Heart right ventricle (tissue), 16 donors: ENCODE measurements at regions of chr11 and their contacts with region 1.

Region 1: DNA sequence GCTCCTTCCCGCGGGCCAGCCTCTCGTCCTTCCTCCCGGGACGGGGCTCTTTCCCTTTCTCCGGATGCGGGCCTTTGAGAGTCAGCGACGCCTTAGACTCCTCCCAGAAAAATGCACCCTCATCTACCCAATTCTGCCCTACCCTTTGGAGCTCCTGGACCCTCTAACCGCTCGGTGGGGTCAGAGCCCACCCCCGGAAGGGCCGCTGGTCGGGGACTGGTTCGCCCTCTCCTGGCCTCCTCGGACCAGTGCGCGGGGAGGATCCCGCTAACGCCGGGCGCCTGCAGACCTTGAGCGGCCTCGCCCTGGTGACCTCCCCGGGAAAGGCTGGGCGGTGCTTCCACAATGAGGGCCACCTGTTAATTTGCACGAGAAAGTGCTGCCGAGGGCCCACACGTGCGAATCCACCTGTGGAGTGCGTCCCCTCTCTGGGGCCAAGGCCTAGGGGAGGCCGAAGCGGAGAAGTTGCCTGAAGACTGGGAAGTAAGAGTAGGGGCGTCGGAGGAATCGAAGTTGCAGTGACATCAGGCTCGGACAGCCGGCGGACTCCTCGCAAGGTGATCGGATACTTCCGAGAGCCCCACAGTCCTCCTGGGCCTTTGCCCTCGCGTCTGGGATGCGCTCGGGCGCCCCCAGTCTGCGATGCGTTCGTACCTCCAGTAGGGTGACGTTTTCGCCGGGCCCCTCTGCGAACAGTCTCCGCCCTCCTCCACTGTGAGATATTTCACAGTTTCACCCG is 61.5 kb downstream of the ENDOD1 start:
- DNase-seq: peak; percentile 88 to 93
- ATAC-seq: peak; percentile 90 to 95 (median 93)
- H3K4me3 ChIP-seq: peak overlapping the region; percentile 32 to 77 (median 63)
- H3K27ac ChIP-seq: peak overlapping the region; percentile 80 to 97 (median 94)
- H3K4me1 ChIP-seq: peaks cover 0 to 53% (median 15%) of the 10 kb centered on the region in 9 donors
- H3K27me3 ChIP-seq: no peaks in the 10 kb centered on the region
- CTCF ChIP-seq: peak; percentile 68 to 90 (median 77)

Region 2: DNA sequence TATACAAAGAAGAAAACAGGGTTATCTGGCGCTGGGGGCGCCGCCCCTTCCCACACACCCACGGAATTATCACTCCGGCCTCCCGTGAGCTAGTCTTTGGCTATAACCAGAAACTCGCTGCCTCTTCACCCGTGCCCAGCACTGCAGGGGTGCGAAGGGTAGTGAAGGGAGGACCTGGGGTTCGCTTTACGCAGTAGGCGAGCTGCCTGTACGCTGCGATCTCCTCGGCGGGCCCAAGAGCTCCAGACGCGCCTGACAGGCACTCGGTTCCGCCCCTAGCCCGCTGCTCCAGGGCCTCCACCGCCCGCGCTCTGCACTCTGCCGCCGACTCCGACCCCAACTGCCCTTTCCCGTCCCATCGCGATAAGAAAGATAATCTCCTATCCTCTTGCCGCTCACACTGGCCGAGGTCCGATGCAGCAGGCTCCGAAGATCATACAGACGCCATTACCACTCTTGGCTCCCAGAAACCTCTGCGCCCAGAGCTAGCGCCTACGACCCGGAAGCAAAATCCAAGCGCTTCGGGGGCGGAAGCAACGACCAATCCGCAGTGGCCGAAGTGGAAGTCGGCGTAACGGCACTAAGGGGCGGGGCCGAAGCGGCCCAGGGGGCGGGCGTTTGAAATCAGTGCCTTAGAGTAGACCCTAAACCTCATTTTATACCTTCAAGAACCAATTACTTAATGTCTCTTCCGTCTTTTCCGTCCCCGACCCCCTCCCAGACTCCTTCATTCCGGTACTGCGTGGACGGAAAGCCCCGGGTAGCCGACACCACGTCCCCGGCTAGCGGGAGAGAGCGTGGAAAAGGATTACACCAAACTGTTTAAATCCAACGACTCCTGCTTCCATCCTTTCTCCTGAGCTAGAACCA is 177.8 kb before region 1 on chr11 and contains the starts of genes CWC15 and KDM4D:
- intact Hi-C with region 1: loop called in 4 of 10 experiments (anchors 5 to 10 kb)
- DNase-seq: peak; percentile 94 to 96
- ATAC-seq: peak; percentile 100
- H3K4me3 ChIP-seq: peak within 1 kb of the TSS; percentile 67 to 97 (median 84)
- H3K27ac ChIP-seq: peak within 1 kb of the TSS in 9 of 10 donors; percentile 56 to 88 (median 81)
- H3K4me1 ChIP-seq: peaks cover 2 to 26% (median 15%) of the 10 kb centered on the region in 9 donors
- H3K27me3 ChIP-seq: no peaks in the 10 kb centered on the region
- CTCF ChIP-seq: no peak
- total RNA-seq, gene CWC15: 53.1 to 75.4 (median 67.3) TPM
- total RNA-seq, gene KDM4D: 0.79 to 1.3 (median 1.0) TPM

Region 3: GRCh38 chr11:95089620-95090542 is 61.2 kb before region 1 on chr11 and contains the start of gene ENDOD1:
- intact Hi-C with region 1: loop called in 2 of 10 experiments (anchors 10 kb)
- DNase-seq: peak; percentile 80 to 88
- ATAC-seq: peak; percentile 95 to 99 (median 98)
- H3K4me3 ChIP-seq: peak within 1 kb of the TSS; percentile 81 to 97 (median 95)
- H3K27ac ChIP-seq: peak within 1 kb of the TSS; percentile 74 to 97 (median 94)
- H3K4me1 ChIP-seq: peaks cover 0 to 45% (median 22%) of the 10 kb centered on the region in 9 donors
- H3K27me3 ChIP-seq: peaks cover 0 to 5% (median 0%) of the 10 kb centered on the region in 7 donors
- CTCF ChIP-seq: peak in 2 of 9 donors; percentile 22 to 25
- total RNA-seq, gene ENDOD1: 7.4 to 15.0 (median 12.3) TPM

Region 4: GRCh38 chr11:95193541-95193940 is 42.4 kb after region 1 on chr11:
- intact Hi-C with region 1: no loop called
- DNase-seq: no peak
- ATAC-seq: no peak
- H3K4me3 ChIP-seq: no peak overlapping the region
- H3K27ac ChIP-seq: no peak overlapping the region
- H3K4me1 ChIP-seq: peaks cover 0 to 6% (median 0%) of the 10 kb centered on the region in 9 donors
- H3K27me3 ChIP-seq: no peaks in the 10 kb centered on the region
- CTCF ChIP-seq: no peak

Region 5: DNA sequence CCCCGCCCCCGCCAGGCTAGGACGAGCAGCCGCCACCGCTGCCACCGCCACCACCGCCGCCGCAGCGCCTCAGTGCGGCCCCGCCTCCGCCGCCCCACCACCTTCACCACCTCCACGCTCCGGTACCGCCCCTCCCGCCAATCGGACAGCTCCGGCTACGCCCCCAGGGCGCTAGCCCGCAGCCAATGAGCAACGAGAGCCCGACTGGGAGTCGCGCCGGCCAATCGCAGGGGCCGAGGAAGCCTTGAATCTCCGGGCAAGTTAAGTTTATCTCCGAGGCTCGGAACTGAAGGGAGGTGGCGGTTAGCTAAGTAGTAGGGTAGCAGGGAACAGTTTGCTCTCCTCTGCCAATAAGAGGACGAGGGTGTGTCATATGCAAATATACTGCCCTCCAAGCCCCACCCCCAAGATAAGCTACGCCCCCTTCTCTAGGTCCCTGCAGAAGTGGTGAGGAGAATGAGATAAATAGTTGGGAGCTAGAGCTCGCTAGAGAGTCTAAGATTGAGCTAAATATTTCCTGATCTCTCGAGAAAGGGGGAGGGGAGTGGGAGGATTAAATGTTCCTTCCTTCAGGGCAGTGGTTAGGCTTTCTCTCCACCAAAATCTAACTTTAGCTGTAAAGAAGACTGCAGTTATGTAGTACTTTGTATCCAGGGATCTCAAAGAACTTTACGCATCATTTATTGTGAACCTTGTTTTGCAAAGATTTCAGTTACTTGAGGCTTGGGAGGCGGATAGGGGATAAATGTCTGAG is 80.2 kb after region 1 on chr11 and contains the start of gene SESN3:
- intact Hi-C with region 1: loop called in 3 of 10 experiments (anchors 2 to 5 kb)
- DNase-seq: peak; percentile 98 to 99
- ATAC-seq: peak; percentile 94 to 99 (median 98)
- H3K4me3 ChIP-seq: peak within 1 kb of the TSS; percentile 63 to 94 (median 84)
- H3K27ac ChIP-seq: peak within 1 kb of the TSS; percentile 70 to 90 (median 88)
- H3K4me1 ChIP-seq: peaks cover 0 to 37% (median 21%) of the 10 kb centered on the region in 9 donors
- H3K27me3 ChIP-seq: no peaks in the 10 kb centered on the region
- CTCF ChIP-seq: peak in 3 of 9 donors; percentile 38 to 45 (median 39)
- total RNA-seq, gene SESN3: 2.6 to 15.4 (median 10.2) TPM

Region 6: DNA sequence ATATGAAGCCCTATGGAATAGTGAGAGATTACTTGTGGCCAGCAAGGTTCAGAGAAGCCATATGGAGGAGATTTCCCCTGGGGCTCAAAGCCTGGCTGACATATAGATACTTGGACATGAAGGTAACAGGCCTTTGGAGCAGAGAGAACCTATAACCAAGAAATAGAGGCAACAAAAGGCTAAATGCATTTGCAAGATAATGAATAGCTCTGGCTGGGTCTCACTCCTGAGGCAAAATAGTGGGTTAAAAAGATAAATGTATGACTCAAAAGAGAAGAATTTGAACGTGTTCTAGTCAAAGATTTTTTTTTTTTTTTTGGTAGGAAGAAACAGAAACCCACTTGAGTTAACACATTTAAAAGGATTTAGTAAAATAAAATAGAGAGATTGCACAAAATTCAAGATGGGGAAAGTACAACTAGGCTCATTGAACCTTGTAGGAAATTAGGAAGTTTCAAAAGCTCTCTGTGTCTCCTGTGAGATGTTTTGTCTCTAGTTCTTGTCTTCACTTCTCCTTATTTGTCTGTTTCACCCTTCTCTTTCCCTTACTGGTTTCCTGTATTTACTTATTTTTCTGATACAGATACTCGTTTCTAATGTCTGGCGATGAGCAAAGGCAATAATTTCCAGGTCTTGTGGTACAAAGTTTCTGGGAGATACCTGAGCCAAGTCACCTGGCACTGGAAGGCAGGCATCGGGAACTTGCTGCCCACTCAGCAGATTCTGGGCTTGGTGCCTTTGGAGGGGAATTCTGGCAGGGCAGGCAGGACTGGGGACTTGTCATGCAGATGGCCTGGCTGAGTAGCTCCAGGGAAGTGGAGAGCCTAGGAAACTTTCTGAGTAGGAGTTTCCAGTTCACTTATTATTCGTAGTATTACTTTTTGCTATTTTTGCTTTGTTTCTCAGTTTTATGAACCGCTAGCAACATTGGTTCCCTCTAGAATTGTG is 129.1 kb after region 1 on chr11:
- intact Hi-C with region 1: no loop called
- DNase-seq: peak in 1 of 2 donors; percentile 32
- ATAC-seq: peak in 4 of 8 donors; percentile 62 to 67 (median 64)
- H3K4me3 ChIP-seq: no peak overlapping the region
- H3K27ac ChIP-seq: peak overlapping the region in 4 of 10 donors; percentile 20 to 36 (median 32)
- H3K4me1 ChIP-seq: peaks cover 0 to 30% (median 0%) of the 10 kb centered on the region in 9 donors
- H3K27me3 ChIP-seq: no peaks in the 10 kb centered on the region
- CTCF ChIP-seq: no peak

Region 7: GRCh38 chr11:95764267-95764898 is 613.3 kb after region 1 on chr11:
- intact Hi-C with region 1: loop called (anchors 1 to 5 kb)
- DNase-seq: no peak
- ATAC-seq: peak in 6 of 8 donors; percentile 50 to 74 (median 58)
- H3K4me3 ChIP-seq: no peak overlapping the region
- H3K27ac ChIP-seq: no peak overlapping the region
- H3K4me1 ChIP-seq: peaks cover 0 to 12% (median 0%) of the 10 kb centered on the region in 9 donors
- H3K27me3 ChIP-seq: peaks cover 0 to 5% (median 0%) of the 10 kb centered on the region in 7 donors
- CTCF ChIP-seq: peak; percentile 44 to 80 (median 74)